ENCODE measurements at regions of chr22 and their contacts with region 1.

Region 1: GRCh38 chr22:46296257-46297150 is at the start of gene GTSE1:
- DNase-seq: peak; percentile 97 to 98 (median 97)
- H3K4me3 ChIP-seq: peak within 1 kb of the TSS; percentile 54 to 100 (median 78)
- H3K27ac ChIP-seq: peak within 1 kb of the TSS in 58 of 59 donors; percentile 4 to 97 (median 90)
- H3K27me3 ChIP-seq: no peaks in the 10 kb centered on the region
- CTCF ChIP-seq: peak in 54 of 56 donors; percentile 40 to 80 (median 60)
- total RNA-seq, gene GTSE1: 0.11 to 1.3 (median 0.53) TPM in 113 of 120 experiments, not detected in the others

Region 2: DNA sequence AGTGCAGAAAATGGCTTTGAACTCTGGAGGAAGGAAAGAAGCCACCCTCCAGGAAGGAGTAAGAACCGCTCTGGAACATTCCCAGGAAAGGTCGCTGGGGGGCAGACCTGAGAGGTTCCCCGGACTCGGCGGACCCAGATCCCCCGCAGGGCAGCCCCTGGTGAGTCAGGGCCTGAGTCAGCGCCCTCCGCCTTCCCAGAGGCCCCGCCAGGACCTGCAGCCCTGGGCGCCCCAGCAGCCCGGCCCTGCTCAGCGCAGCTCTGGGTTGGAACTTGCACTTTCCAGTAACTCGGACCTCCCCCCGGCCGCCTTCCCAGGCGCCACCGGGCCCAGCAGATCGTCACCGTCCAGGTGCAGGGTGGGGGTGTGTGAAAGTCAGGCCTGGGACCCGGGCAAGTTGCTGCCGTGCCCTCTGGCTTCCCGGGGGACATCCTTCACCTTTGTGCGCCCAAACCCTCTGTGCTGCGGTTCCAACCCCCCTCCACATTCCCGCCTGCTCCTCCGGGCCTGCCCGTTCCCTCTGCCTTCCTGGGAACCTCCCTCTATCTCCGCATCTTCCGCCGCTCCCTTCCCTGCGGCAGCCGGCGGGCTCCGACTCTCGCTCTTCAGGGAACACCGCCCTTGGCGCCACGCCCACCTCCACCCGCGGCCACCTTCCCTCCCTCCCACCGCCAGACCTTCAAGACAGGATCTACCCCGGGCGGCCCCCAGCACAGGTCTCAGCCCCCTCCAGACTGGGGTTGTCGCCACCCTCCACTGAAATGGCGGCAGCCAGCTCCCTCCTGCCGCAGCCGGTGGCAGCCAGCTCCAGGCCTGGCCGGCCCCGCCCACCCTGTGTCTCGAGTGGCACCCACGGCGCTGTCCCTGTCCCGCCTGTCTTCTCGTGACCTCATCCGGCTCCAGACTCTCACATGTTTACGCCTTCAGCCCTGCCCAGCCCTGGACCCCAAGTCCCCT is 282.8 kb before region 1 on chr22:
- intact Hi-C with region 1: loop called in 1 of 2 experiments (anchors 5 kb)
- DNase-seq: peak; percentile 77 to 95 (median 83)
- H3K4me3 ChIP-seq: peak overlapping the region; percentile 30 to 80 (median 68)
- H3K27ac ChIP-seq: peak overlapping the region; percentile 68 to 99 (median 96)
- H3K27me3 ChIP-seq: no peaks in the 10 kb centered on the region
- CTCF ChIP-seq: peak; percentile 50 to 83 (median 71)

Region 3: DNA sequence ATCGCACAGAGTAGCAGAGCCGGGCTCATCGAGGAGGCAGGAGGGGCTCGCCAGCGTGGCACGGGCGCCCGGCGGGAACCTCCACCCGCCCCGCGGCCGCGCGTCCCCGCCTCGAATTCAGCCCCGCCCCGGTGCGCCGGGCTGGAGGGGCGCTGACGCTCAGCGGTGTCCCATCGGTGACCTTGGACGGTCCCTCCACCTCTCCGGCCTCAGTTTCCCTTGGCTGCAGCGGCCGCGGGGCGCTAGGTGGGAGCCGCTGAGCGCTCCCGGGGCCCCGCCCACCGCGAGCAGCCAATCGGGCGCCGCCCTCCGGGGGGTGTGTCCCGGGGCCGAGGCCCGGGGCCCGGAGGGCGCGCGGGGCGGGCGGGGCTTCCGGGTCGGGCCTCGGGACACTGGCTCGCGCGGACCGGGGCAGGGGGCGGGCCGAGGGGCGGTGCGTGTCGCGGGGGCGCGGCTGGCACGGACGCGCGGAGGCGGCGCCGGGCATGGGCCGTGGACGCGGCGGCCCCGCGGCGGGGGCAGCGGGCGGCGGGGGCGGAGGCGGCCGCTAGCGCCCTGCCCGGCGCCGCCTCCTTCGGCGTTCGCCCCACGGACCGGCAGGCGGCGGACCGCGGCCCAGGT is 146.4 kb before region 1 on chr22 and contains the start of gene PPARA:
- intact Hi-C with region 1: loop called in 1 of 2 experiments (anchors 5 kb)
- DNase-seq: peak; percentile 57 to 93 (median 84)
- H3K4me3 ChIP-seq: peak within 1 kb of the TSS; percentile 69 to 98 (median 85)
- H3K27ac ChIP-seq: peak within 1 kb of the TSS; percentile 74 to 99 (median 97)
- H3K27me3 ChIP-seq: peaks cover 0 to 16% (median 0%) of the 10 kb centered on the region in 45 donors
- CTCF ChIP-seq: peak in 1 of 56 donors; percentile 15
- total RNA-seq, gene PPARA: 13.9 to 53.9 (median 22.6) TPM

Region 4: GRCh38 chr22:46256358-46256958 is 40.0 kb before region 1 on chr22:
- intact Hi-C with region 1: loop called in 1 of 2 experiments (anchors 5 kb)
- DNase-seq: no peak
- H3K4me3 ChIP-seq: no peak overlapping the region
- H3K27ac ChIP-seq: no peak overlapping the region
- H3K27me3 ChIP-seq: peaks cover 0 to 20% (median under 1%) of the 10 kb centered on the region in 45 donors
- CTCF ChIP-seq: no peak

Region 5: GRCh38 chr22:46273432-46274183 is 22.9 kb before region 1 on chr22:
- intact Hi-C with region 1: no loop called
- DNase-seq: peak in 1 of 10 donors; percentile 10
- H3K4me3 ChIP-seq: no peak overlapping the region
- H3K27ac ChIP-seq: no peak overlapping the region
- H3K27me3 ChIP-seq: no peaks in the 10 kb centered on the region
- CTCF ChIP-seq: no peak

Region 6: GRCh38 chr22:46329616-46330015 is 33.1 kb after region 1 on chr22:
- intact Hi-C with region 1: loop called in 1 of 2 experiments (anchors 5 kb)
- DNase-seq: peak in 1 of 10 donors; percentile 28
- H3K4me3 ChIP-seq: no peak overlapping the region
- H3K27ac ChIP-seq: no peak overlapping the region
- H3K27me3 ChIP-seq: no peaks in the 10 kb centered on the region
- CTCF ChIP-seq: no peak

Region 7: GRCh38 chr22:46462726-46463371 is 166.3 kb after region 1 on chr22:
- intact Hi-C with region 1: no loop called
- DNase-seq: no peak
- H3K4me3 ChIP-seq: no peak overlapping the region
- H3K27ac ChIP-seq: no peak overlapping the region
- H3K27me3 ChIP-seq: peaks cover 0 to 18% (median 0%) of the 10 kb centered on the region in 45 donors
- CTCF ChIP-seq: no peak

Region 8: DNA sequence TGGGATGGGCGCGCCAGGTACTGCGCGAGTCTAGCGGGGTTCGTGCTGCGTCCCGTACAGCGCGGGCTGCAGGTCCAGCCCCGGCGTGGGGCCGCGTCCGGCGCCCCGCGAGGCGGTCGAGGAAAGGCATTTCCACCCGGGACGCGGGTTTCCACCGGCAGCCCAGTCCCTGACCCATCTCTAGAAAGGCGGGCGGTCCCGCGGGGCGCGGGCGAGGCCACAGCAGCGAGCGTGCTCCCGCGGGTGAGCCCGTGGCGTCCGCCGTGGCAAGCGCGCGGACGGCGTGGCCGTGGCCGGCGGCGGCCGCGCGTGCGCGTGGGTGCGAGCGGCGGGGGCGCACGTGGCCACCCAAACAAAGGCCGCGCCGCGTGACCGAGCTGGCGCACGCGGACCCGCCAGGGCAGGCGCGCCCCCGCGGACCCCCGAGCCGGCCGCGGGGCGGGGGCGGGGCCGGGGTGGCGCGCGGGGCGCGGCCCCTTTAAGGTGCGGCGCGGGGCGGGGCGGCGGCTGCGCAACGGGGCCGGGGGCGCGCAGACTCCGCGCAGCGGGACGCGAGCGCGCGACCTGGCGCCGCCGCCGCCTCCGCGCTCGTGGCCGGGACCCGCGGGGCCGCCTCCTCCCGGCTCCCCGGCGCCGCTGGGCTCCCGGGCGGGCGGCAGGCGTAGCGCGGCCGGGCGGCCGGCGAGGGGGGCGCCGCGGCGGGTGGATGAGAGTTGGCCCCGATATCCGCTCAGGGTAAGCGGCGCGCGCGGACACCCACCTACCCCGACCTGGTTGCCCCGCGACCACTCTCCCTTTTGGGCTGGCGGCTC is 280.3 kb after region 1 on chr22:
- intact Hi-C with region 1: no loop called
- DNase-seq: peak in 4 of 10 donors; percentile 40 to 59 (median 57)
- H3K4me3 ChIP-seq: peak overlapping the region; percentile 8 to 83 (median 73)
- H3K27ac ChIP-seq: peak overlapping the region in 45 of 59 donors; percentile 10 to 87 (median 72)
- H3K27me3 ChIP-seq: no peaks in the 10 kb centered on the region
- CTCF ChIP-seq: no peak